Dorsolateral prefrontal cortex (tissue), 120 donors: ENCODE measurements at regions of chr14 and their contacts with region 1.

Region 1: GRCh38 chr14:58107947-58108552 is 44.0 kb downstream of the ARMH4 start:
- DNase-seq: peak in 4 of 10 donors; percentile 31 to 62 (median 42)
- H3K4me3 ChIP-seq: no peak overlapping the region
- H3K27ac ChIP-seq: no peak overlapping the region
- H3K27me3 ChIP-seq: no peaks in the 10 kb centered on the region
- CTCF ChIP-seq: peak; percentile 41 to 97 (median 81)

Region 2: GRCh38 chr14:58141893-58142292 is 33.8 kb after region 1 on chr14:
- intact Hi-C with region 1: no loop called
- DNase-seq: no peak
- H3K4me3 ChIP-seq: no peak overlapping the region
- H3K27ac ChIP-seq: no peak overlapping the region
- H3K27me3 ChIP-seq: no peaks in the 10 kb centered on the region
- CTCF ChIP-seq: no peak

Region 3: DNA sequence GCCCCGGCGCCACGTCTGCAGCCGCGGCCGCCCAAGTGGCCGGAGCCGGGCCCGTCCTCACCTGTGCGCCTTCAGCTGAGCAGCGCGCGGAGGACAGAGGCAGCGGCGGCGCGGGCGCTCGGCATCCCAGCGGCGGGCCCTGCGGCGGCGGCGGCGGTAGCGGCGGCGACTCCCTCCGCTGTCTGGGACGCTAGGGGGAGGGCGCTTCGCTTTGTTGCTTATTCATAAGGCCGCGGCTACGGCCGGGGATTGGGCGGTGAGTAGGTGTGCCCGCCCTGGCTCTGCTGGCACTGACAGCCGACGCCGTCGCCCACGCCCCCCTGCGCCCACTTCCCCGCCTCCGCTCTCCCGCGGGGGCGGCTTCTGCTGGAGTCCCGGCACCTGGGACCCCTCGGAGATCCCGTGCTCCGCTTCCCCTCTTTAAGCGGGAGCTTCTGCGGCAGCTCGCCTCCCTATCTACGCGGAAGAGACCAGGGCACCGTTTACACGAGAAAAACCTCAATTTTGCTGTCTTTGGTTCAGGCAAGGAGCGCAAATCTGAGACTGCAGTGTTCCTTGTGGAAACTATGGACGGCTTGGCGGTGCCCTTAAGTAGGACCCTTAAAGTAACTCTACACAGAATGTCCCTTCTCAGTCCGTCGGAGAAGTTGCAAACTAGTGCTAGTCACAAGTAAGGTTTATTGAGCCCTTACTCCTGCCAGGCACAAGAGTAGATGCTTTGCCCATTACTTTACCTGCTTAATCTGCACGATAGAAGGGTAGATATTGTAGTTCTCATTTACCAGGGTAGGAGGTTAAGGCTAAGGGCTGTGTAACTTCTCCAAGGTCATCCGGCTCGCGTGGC is 44.2 kb after region 1 on chr14 and contains the start of gene ARMH4:
- intact Hi-C with region 1: loop called in 1 of 2 experiments (anchors 5 kb)
- DNase-seq: peak; percentile 61 to 89 (median 86)
- H3K4me3 ChIP-seq: peak within 1 kb of the TSS; percentile 69 to 97 (median 85)
- H3K27ac ChIP-seq: peak within 1 kb of the TSS in 56 of 59 donors; percentile 5 to 89 (median 74)
- H3K27me3 ChIP-seq: no peaks in the 10 kb centered on the region
- CTCF ChIP-seq: peak in 43 of 56 donors; percentile 9 to 63 (median 36)
- total RNA-seq, gene ARMH4: 19.2 to 48.5 (median 33.8) TPM

Region 4: GRCh38 chr14:58166005-58166983 is 58.2 kb after region 1 on chr14:
- intact Hi-C with region 1: loop called (anchors 2 kb)
- DNase-seq: peak; percentile 77 to 92 (median 84)
- H3K4me3 ChIP-seq: no peak overlapping the region
- H3K27ac ChIP-seq: peak overlapping the region in 8 of 59 donors; percentile 27 to 56 (median 40)
- H3K27me3 ChIP-seq: no peaks in the 10 kb centered on the region
- CTCF ChIP-seq: peak; percentile 63 to 95 (median 87)

Region 5: GRCh38 chr14:58200480-58200841 is 92.4 kb after region 1 on chr14:
- intact Hi-C with region 1: no loop called
- DNase-seq: peak in 1 of 10 donors; percentile 8
- H3K4me3 ChIP-seq: peak overlapping the region; percentile 56 to 99 (median 90)
- H3K27ac ChIP-seq: peak overlapping the region; percentile 67 to 97 (median 91)
- H3K27me3 ChIP-seq: no peaks in the 10 kb centered on the region
- CTCF ChIP-seq: no peak

Region 6: GRCh38 chr14:58244556-58245387 is 136.7 kb after region 1 on chr14 and contains the start of gene PSMA3:
- intact Hi-C with region 1: loop called in 1 of 2 experiments (anchors 5 kb)
- DNase-seq: peak; percentile 92 to 98 (median 96)
- H3K4me3 ChIP-seq: peak within 1 kb of the TSS; percentile 63 to 99 (median 90)
- H3K27ac ChIP-seq: peak within 1 kb of the TSS; percentile 74 to 98 (median 93)
- H3K27me3 ChIP-seq: no peaks in the 10 kb centered on the region
- CTCF ChIP-seq: peak in 44 of 56 donors; percentile 5 to 64 (median 35)
- total RNA-seq, gene PSMA3: 45.6 to 146 (median 80.0) TPM

Region 7: DNA sequence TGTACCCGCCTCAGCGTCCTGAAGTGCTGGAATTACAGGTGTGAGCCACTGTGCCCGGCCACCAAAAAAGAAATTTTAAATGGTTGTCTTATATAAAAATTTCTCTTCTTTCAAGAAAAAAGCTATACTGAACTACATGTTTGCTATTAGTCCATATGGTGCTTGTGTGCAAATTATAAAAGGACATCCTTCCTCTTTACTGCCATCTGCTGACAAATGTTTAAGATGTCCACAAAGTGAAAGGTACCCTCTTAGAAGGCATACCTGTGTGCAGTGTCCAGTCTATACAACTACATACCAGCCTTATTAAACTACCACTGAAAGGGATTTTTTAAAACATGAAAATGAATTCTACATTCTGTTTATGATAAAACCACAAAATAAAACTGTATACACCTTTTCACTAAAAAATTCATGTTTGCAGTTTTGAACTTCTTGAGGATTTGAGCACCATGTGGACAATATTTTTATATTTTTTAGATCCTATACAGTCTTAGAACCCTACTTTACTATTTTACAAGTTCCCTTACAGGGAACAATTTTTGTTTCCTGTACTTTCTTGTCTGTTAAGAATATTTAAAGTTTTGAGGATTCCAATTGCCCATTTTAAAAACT is 254.9 kb after region 1 on chr14:
- intact Hi-C with region 1: loop called in 1 of 2 experiments (anchors 10 kb)
- DNase-seq: no peak
- H3K4me3 ChIP-seq: no peak overlapping the region
- H3K27ac ChIP-seq: no peak overlapping the region
- H3K27me3 ChIP-seq: no peaks in the 10 kb centered on the region
- CTCF ChIP-seq: peak in 48 of 56 donors; percentile 7 to 63 (median 38)